Cardiac septum (tissue), 1 donor: ENCODE measurements at regions of chr3 and their contacts with region 1.

Region 1: DNA sequence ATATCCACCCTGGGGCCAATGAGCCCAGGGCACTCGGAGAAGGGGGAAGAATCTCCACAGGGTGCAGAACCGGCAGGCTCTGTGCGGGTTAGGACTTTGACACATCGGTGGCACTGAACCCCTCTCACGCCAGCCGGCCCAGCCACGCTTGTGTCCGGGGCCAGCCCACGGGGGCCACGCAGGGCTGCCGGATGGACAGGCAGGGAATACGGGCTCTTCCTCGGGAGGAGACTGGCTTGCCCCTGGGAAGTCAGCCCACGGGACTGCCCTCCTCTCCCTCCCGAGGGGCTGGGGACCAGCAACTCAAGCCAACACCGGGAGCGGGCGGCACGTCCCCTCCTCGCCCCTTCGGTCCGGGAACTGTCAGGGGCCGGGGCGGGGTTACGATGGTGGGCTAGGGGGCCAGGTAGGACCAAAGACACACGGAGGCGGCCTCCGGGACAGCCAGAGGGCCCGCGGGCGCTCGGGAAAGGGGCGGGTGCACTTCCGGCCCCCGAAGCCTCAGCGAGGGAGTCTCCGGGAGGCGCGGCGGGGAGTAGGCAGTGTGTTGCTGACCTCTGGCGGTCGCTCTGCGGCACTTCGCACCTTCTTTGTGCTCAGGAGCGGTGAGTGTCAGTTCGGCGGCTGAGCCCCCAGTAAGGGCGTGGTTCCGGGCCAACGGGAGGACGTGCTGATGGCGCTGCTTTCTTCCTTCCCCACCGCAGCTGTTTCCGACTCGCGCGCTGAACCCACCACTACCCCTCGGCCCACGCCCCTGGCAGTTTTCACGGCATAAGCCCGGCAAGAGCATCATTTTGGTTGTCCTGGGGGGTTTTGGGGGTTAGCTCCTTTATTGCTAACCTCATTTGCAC is 5.1 kb upstream of the CYP8B1 start:
- DNase-seq: peak; percentile 88

Region 2: DNA sequence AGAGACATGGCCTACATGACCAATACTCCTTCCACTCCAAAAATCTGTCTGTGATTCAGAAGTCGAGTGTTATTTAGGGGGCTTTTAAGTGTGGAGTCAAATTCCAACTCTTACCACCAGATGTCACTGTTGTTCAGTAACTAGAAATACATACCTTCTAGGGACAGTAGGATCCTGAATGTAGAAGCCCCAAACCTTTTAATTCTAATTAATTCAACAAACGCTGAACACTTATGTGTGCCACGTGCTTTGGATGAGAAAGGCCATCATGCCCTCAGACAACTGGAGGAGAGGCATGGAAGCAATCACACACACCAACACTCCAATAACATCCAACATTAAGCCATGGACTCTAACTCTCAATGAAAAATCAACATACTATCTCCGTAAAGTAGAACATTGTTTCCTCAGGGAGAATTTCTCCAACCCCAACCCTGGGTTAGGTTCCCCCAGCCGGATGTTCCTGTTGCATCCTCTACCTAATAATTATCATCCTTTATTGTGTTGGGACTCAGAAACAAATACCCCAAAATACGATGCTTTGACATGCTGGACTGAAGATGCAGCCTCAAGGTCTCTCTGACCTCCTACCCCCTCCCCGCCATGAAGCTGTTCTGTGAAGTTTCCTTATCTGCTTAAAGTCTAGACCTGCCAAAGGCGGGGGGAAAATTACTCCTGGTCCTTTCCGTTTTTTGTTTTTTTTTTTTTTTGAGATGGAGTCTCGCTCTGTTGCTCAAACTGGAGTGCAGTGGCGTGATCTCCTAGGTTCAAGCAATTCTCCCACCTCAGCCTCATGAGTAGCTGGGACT is 99.7 kb before region 1 on chr3:
- intact Hi-C with region 1: loop called (anchors 2 kb)
- DNase-seq: no peak

Region 3: DNA sequence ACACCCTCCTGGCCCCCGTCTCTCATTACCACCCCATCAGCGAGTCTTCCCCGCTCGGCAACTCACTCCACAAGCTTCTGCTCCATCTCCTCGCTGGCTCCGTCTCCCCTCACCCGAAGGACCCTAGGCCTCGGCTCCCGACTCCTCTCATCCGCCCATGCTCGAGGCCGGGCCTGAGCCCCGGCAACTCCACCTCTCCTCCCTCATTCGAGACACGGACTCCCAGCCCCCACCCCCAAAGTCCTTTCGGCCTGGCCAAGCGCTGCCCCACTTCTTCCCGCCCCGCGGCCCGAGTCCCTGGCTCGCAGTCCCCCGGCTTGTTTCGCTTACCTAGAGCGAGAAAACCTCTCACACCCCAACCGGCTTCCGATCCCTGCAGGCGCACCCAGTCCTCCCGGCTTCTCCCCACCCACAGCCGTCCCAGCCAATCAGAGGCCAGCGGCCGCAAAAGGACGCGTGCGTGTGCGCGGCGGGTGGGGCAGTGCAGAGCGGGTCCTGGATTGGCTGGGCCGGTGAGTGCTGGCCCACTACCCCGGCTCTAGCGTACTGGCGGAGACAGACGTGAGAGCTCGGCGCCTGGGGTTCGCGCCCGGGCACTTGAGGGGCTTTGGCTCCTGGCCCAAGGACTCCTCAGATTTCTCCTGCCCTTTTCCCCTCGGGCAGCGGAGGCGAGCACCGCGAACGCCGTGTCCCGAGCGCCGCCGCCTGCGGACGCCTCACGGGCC is 76.6 kb before region 1 on chr3 and contains the start of gene HIGD1A:
- intact Hi-C with region 1: no loop called
- DNase-seq: peak; percentile 99
- total RNA-seq, gene HIGD1A: 266 TPM

Region 4: GRCh38 chr3:42831321-42831713 is 49.5 kb before region 1 on chr3:
- intact Hi-C with region 1: loop called (anchors 2 kb)
- DNase-seq: peak; percentile 88

Region 5: GRCh38 chr3:42839616-42840015 is 41.2 kb before region 1 on chr3:
- intact Hi-C with region 1: loop called (anchors 2 kb)
- DNase-seq: no peak

Region 6: DNA sequence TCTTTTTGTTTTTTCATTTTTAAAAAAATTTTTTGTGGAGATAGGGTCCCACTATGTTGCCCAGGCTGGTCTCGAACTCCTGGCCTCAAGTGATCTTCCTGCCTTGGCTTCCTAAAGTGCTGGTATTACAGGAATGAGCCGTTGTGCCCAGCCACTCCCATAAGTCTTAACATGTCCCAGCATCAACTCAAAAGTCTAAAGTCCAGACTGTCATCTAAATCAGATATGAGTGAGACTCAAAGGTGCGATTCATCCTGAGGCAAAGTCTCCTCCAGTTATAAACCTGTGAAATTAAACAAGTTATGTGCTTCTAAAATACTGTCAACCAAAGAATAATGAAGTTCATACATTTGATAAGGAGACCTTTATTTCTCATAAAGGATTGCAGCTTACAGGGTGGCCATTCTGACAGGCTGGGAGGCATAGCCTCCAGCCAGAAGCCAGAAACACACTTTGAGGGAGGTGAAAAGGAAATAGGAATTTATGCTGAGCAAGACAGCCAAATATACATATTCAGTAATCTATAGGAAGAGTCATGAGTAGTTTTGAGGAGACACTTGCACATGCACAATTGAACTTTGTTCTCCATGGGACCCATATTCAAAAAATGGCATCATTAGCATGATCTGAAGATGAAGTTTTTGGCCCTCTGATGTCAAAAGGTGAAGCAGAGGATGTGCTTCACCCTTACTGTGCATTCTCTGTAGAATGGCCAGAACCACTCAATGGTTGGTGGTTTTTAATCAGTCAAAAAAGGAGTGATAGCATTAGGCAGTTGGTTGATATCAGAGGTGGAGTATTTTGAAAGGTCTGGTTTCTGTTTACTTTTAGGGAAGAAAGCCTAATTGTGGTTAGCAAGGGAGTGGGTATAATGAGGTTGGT is 14.1 kb after region 1 on chr3:
- intact Hi-C with region 1: no loop called
- DNase-seq: no peak

Region 7: GRCh38 chr3:43279082-43279481 is 398.3 kb after region 1 on chr3:
- intact Hi-C with region 1: no loop called
- DNase-seq: no peak